ENCODE measurements at regions of chr9 and their contacts with region 1.

Region 1: GRCh38 chr9:16023446-16023845 is 470.6 kb downstream of the CCDC171 start:
- DNase-seq: peak; percentile 84
- ATAC-seq: peak; percentile 53
- H3K4me3 ChIP-seq: no peak overlapping the region
- H3K27ac ChIP-seq: no peak overlapping the region; the same call in 1 of the 2 replicates
- H3K4me1 ChIP-seq: peaks cover 20% of the 10 kb centered on the region
- H3K27me3 ChIP-seq: no peaks in the 10 kb centered on the region
- CTCF ChIP-seq: no peak
- POLR2A ChIP-seq: no peak
- RAD21 ChIP-seq: peak; percentile 1; the same call in 1 of the 2 replicates

Region 2: GRCh38 chr9:15927161-15927560 is 96.3 kb before region 1 on chr9:
- CTCF ChIA-PET with region 1: no interaction called
- POLR2A ChIA-PET with region 1: no interaction called
- dilution Hi-C with region 1: no loop called
- in situ Hi-C with region 1: no loop called
- intact Hi-C with region 1: loop called (anchors 5 kb)
- DNase-seq: peak; percentile 24
- ATAC-seq: peak; percentile 48
- H3K4me3 ChIP-seq: no peak overlapping the region
- H3K27ac ChIP-seq: no peak overlapping the region
- H3K4me1 ChIP-seq: no peaks in the 10 kb centered on the region
- H3K27me3 ChIP-seq: no peaks in the 10 kb centered on the region
- CTCF ChIP-seq: no peak
- POLR2A ChIP-seq: no peak
- RAD21 ChIP-seq: no peak

Measured in IMR-90 (cell line).